MCF 10A (cell line): ENCODE measurements at regions of chr16 and their contacts with region 1.

Region 1: DNA sequence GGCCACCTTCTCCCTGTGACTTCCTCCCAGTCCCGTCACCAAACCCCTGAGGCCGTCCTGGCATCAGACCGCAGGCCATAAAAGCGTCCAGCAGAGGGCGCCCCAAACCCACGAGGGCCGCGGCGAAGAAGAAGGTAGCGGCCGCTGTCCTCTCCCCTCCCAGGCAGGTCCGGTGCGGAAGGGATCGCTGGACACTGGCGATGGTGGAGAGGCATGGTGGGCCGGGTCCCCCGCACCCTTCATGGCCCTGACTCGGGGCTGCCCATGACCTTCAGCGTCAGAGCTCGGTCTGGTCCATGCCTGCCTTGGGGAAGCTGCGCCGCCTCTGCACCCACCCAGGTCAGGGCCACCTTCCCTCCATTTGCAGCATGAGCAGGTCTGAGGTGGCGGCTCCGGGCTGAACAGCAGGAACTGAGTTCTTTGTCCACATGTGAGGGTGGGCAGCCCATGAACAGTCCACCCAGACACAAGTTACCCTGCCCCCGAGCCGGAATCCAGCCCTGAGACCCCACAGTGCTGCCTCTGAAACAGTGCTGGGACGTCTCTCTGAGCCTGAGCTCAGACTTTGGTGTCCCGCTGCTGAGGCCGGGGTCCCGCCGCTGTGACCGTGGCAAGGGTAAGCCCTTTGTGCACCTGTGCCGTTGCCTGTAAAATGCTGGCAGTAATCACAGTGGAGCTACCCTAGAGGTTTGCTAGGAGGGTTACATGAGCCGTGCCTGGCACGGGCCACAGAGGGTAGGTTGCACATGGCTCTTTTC is 40.8 kb upstream of the CMIP start:
- DNase-seq: peak; percentile 75
- H3K4me3 Mint-ChIP-seq: no peak overlapping the region
- H3K27ac Mint-ChIP-seq: no peak overlapping the region
- H3K4me1 Mint-ChIP-seq: peaks cover 27% of the 10 kb centered on the region
- H3K27me3 Mint-ChIP-seq: no peaks in the 10 kb centered on the region
- CTCF ChIP-seq: peak; percentile 92

Region 2: DNA sequence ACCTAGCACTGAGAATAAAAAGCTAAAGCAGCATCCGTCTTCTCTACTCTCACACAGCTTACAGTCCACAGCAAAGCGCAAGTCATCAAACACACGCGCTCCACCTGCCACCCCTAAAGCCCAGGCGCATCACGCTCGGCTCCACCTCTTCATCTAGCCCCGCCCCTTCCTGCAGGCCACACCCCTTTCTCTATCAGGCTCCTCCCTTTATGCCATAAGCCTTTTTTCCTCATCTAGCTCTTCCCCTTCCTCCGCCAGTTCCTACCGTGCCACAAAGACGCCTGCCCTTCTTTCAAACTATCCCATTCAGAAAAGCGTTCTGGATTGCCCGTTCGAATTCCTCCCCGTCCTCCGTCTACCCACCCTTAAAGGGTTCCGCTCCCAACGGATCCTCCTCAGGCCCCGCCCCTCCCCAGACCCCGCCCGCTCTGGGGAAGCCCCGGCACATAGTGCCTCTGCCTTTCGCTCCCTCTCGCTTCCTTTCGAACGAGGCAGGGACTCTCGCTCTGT is 327.2 kb before region 1 on chr16:
- CTCF ChIA-PET with region 1: no interaction called
- POLR2A ChIA-PET with region 1: no interaction called
- intact Hi-C with region 1: no loop called
- DNase-seq: peak; percentile 89
- H3K4me3 Mint-ChIP-seq: no peak overlapping the region
- H3K27ac Mint-ChIP-seq: no peak overlapping the region
- H3K4me1 Mint-ChIP-seq: no peaks in the 10 kb centered on the region
- H3K27me3 Mint-ChIP-seq: no peaks in the 10 kb centered on the region
- CTCF ChIP-seq: no peak

Region 3: DNA sequence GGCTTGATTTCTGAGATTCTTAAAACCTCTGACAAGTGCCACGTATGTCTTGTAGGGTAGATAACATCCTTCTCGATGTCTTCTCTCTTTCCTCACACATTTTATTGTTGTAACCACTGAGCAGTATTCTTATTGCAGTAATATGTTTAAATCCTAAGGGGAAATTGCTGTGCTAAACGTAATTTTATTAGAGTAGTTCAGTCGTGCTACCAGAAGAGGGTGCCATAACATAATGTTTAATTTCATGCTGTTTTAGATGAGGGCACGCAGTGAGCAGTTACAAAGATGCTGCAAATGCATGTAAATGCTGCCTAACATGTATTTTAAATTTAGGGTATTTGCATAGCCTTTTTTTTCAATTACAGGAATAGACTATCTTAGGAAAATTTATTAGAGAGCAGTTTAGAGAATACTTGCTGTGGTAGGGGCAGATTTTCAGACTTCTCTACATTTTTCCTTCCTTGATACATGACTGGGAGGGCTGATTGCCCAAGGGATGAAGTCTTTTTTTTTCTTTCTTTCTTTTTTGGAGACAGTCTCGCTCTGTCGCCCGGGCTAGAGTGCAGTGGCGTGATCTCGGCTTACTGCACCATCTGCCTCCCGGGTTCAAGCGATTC is 37.4 kb before region 1 on chr16:
- CTCF ChIA-PET with region 1: interaction called, 11 read pairs
- POLR2A ChIA-PET with region 1: no interaction called
- intact Hi-C with region 1: no loop called
- DNase-seq: peak; percentile 60
- H3K4me3 Mint-ChIP-seq: no peak overlapping the region
- H3K27ac Mint-ChIP-seq: no peak overlapping the region
- H3K4me1 Mint-ChIP-seq: no peaks in the 10 kb centered on the region
- H3K27me3 Mint-ChIP-seq: no peaks in the 10 kb centered on the region
- CTCF ChIP-seq: peak; percentile 57

Region 4: GRCh38 chr16:81493755-81494433 is 90.1 kb after region 1 on chr16:
- CTCF ChIA-PET with region 1: interaction called, 3 read pairs
- POLR2A ChIA-PET with region 1: interaction called, 11 read pairs
- intact Hi-C with region 1: loop called (anchors 2 kb)
- DNase-seq: peak; percentile 89
- H3K4me3 Mint-ChIP-seq: peak overlapping the region; percentile 14
- H3K27ac Mint-ChIP-seq: peak overlapping the region; percentile 89
- H3K4me1 Mint-ChIP-seq: peaks cover 43% of the 10 kb centered on the region
- H3K27me3 Mint-ChIP-seq: no peaks in the 10 kb centered on the region
- CTCF ChIP-seq: no peak

Region 5: GRCh38 chr16:81585785-81586184 is 182.0 kb after region 1 on chr16:
- CTCF ChIA-PET with region 1: interaction called, 4 read pairs
- POLR2A ChIA-PET with region 1: interaction called, 3 read pairs
- intact Hi-C with region 1: loop called (anchors 10 kb)
- DNase-seq: peak; percentile 39
- H3K4me3 Mint-ChIP-seq: no peak overlapping the region
- H3K27ac Mint-ChIP-seq: peak overlapping the region; percentile 77
- H3K4me1 Mint-ChIP-seq: peaks cover 56% of the 10 kb centered on the region
- H3K27me3 Mint-ChIP-seq: no peaks in the 10 kb centered on the region
- CTCF ChIP-seq: no peak

Region 6: DNA sequence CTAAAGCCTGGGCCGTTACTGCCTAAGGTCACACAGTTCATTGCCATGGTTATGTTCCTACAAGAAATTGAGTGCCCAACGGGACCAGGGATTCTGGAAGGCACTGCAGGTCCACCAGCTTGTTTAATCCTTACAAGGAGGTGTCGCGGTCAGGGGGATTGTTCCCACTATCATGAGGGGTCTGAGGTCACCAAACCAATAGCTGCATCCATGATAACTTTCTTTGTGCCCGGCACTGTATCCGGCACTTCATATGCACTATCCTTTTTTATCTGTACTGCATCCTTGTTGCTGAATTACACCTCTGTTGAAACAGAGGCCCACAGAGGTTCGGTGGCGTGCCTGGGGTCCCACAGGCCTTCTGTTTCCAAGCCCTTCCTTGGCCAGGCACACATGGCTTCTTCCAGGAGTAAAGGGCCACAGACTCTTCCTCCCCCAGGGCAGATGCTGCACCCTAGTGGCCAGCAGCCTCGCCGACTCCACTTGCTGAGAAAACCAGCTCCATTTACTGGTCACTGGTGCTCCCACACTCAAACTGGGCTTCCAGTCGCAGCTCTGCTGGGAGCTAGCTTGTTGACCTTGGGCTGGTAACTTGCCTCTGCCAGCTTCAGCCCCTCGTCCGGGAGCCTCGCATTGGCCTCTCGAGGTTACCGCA is 293.3 kb after region 1 on chr16:
- CTCF ChIA-PET with region 1: interaction called, 8 read pairs
- POLR2A ChIA-PET with region 1: interaction called, 3 read pairs
- intact Hi-C with region 1: loop called (anchors 1 kb)
- DNase-seq: peak; percentile 52
- H3K4me3 Mint-ChIP-seq: no peak overlapping the region
- H3K27ac Mint-ChIP-seq: no peak overlapping the region
- H3K4me1 Mint-ChIP-seq: no peaks in the 10 kb centered on the region
- H3K27me3 Mint-ChIP-seq: no peaks in the 10 kb centered on the region
- CTCF ChIP-seq: peak; percentile 84

Region 7: GRCh38 chr16:81723098-81723723 is 319.4 kb after region 1 on chr16:
- CTCF ChIA-PET with region 1: interaction called, 65 read pairs
- POLR2A ChIA-PET with region 1: no interaction called
- intact Hi-C with region 1: loop called (anchors 1 kb)
- DNase-seq: peak; percentile 86
- H3K4me3 Mint-ChIP-seq: no peak overlapping the region
- H3K27ac Mint-ChIP-seq: no peak overlapping the region
- H3K4me1 Mint-ChIP-seq: peaks cover 15% of the 10 kb centered on the region
- H3K27me3 Mint-ChIP-seq: no peaks in the 10 kb centered on the region
- CTCF ChIP-seq: peak; percentile 68